Activated naive CD4-positive, alpha-beta T cell treated with anti-CD3 and anti-CD28 coated beads for 36 hours (primary cell): ENCODE measurements at regions of chr17 and their contacts with region 1.

Region 1: GRCh38 chr17:40622509-40622928 is 25.1 kb downstream of the SMARCE1 start:
- DNase-seq: no peak
- H3K4me3 Mint-ChIP-seq: no peak overlapping the region
- H3K27ac Mint-ChIP-seq: no peak overlapping the region
- H3K4me1 Mint-ChIP-seq: peaks cover 51% of the 10 kb centered on the region
- H3K27me3 Mint-ChIP-seq: no peaks in the 10 kb centered on the region

Region 2: GRCh38 chr17:40317880-40318829 is 304.4 kb before region 1 on chr17:
- CTCF ChIA-PET with region 1: no interaction called
- intact Hi-C with region 1: no loop called
- DNase-seq: peak; percentile 94
- H3K4me3 Mint-ChIP-seq: peak overlapping the region; percentile 85
- H3K27ac Mint-ChIP-seq: peak overlapping the region; percentile 90
- H3K4me1 Mint-ChIP-seq: peaks cover 75% of the 10 kb centered on the region
- H3K27me3 Mint-ChIP-seq: no peaks in the 10 kb centered on the region

Region 3: GRCh38 chr17:40474419-40475002 is 148.0 kb before region 1 on chr17:
- CTCF ChIA-PET with region 1: no interaction called
- intact Hi-C with region 1: no loop called
- DNase-seq: no peak
- H3K4me3 Mint-ChIP-seq: no peak overlapping the region
- H3K27ac Mint-ChIP-seq: no peak overlapping the region
- H3K4me1 Mint-ChIP-seq: peaks cover 11% of the 10 kb centered on the region
- H3K27me3 Mint-ChIP-seq: no peaks in the 10 kb centered on the region

Region 4: GRCh38 chr17:40551879-40552768 is 70.4 kb before region 1 on chr17:
- CTCF ChIA-PET with region 1: interaction called, 205 read pairs
- intact Hi-C with region 1: no loop called
- DNase-seq: peak; percentile 32
- H3K4me3 Mint-ChIP-seq: peak overlapping the region; percentile 35
- H3K27ac Mint-ChIP-seq: peak overlapping the region; percentile 89
- H3K4me1 Mint-ChIP-seq: peaks cover 100% of the 10 kb centered on the region
- H3K27me3 Mint-ChIP-seq: no peaks in the 10 kb centered on the region

Region 5: GRCh38 chr17:40647624-40648383 is 25.3 kb after region 1 on chr17 and contains the start of gene SMARCE1:
- CTCF ChIA-PET with region 1: interaction called, 8 read pairs
- intact Hi-C with region 1: loop called (anchors 2 kb)
- DNase-seq: peak; percentile 67
- H3K4me3 Mint-ChIP-seq: peak within 1 kb of the TSS; percentile 87
- H3K27ac Mint-ChIP-seq: peak within 1 kb of the TSS; percentile 97
- H3K4me1 Mint-ChIP-seq: peaks cover 35% of the 10 kb centered on the region
- H3K27me3 Mint-ChIP-seq: no peaks in the 10 kb centered on the region
- total RNA-seq, gene SMARCE1: 102 to 112 TPM

Region 6: GRCh38 chr17:40818733-40819527 is 196.4 kb after region 1 on chr17:
- CTCF ChIA-PET with region 1: interaction called, 5 read pairs
- intact Hi-C with region 1: loop called (anchors 2 kb)
- DNase-seq: peak; percentile 87
- H3K4me3 Mint-ChIP-seq: peak overlapping the region; percentile 91
- H3K27ac Mint-ChIP-seq: peak overlapping the region; percentile 91
- H3K4me1 Mint-ChIP-seq: peaks cover 14% of the 10 kb centered on the region
- H3K27me3 Mint-ChIP-seq: peaks cover 4% of the 10 kb centered on the region